ENCODE measurements at regions of chr1 and their contacts with region 1.

Region 1: GRCh38 chr1:175192630-175193526 is at the start of gene KIAA0040:
- DNase-seq: peak; percentile 51
- H3K4me3 Mint-ChIP-seq: peak within 1 kb of the TSS; percentile 95
- H3K27ac Mint-ChIP-seq: peak within 1 kb of the TSS; percentile 92
- H3K4me1 Mint-ChIP-seq: peaks cover 55% of the 10 kb centered on the region
- H3K27me3 Mint-ChIP-seq: no peaks in the 10 kb centered on the region
- total RNA-seq, gene KIAA0040: 30.0 and 35.3 TPM in 2 replicates

Region 2: DNA sequence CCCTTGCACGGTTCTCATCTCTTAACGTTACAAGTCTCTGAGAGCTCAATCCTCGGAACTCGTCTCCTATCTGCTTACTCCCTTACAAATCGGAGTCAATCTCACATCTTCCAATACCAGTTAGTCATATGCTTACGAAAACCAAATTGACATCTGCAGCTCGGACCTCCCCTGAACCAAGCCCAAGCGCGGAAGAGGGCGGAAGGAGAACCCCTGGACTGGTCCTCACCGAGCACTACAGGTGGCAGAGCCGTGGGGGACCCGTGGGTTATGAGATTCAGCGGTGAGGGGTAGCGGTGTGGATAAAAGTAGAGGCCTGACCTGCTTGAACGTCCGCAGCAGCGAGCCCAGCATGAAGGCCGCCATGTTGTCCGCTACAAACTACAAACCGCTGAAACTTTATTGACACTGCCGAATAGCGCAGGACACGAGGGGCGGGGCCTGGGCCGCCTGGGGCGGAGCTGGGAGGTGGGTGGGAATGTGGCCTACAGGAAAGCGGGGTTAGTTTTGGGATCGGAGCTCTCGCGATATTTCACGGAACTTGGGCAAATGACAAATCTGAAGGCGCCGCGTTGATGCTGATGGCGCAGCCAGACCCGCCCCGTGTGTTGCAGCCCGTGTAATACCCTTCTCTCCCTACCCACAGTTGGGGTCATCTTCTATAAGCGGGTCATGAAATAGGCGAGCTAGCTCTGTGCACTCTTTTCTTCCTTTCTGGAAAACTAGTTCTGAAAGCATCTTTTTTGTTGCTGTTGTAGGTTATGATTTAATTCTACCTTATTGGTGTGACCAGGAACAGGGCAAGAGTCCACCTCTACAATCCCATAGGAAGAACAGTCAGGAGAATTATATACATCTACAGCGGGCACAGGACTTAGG is 169.6 kb before region 1 on chr1 and contains the start of gene MRPS14:
- intact Hi-C with region 1: loop called (anchors 5 kb)
- DNase-seq: peak; percentile 96
- H3K4me3 Mint-ChIP-seq: peak within 1 kb of the TSS; percentile 99
- H3K27ac Mint-ChIP-seq: peak within 1 kb of the TSS; percentile 92
- H3K4me1 Mint-ChIP-seq: peaks cover 29% of the 10 kb centered on the region
- H3K27me3 Mint-ChIP-seq: no peaks in the 10 kb centered on the region
- total RNA-seq, gene MRPS14: 31.5 and 32.9 TPM in 2 replicates

Region 3: DNA sequence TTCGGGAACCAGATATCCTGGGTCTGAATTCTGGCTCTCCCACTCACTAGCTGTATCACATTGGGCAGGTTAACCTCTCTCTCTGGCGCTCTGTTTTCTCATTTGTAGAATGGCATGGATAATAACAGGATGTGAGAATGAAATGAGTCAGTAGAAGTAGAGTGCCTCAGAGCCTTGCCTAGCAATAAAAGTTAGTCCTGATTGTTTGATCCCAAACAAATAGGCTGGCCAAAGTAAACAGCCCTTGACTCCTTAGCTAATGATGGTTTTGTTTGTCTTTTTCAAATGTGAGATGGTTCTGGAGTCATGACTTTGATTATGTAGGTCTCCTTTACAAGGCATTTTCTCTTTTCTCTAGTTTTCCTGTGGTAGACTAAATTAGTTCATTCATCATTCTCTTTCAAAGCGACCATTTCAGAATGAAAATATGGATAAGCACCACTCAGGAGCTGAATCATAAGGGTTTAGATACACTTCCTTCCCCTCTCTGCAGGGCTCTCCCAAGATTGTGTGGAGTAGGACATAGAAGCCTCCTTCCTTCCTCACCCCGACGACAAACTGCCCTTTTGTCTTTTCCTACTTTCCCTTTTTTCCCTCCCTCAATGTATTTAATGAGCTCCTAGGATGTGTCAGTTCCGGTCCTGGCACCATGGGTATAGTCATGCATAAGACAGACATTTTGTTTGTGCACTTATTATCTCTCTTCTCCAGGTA is 23.4 kb before region 1 on chr1:
- intact Hi-C with region 1: loop called (anchors 2 kb)
- DNase-seq: no peak
- H3K4me3 Mint-ChIP-seq: no peak overlapping the region
- H3K27ac Mint-ChIP-seq: peak overlapping the region; percentile 39
- H3K4me1 Mint-ChIP-seq: peaks cover 50% of the 10 kb centered on the region
- H3K27me3 Mint-ChIP-seq: no peaks in the 10 kb centered on the region

Region 4: GRCh38 chr1:175221666-175222175 is 28.8 kb after region 1 on chr1:
- intact Hi-C with region 1: loop called (anchors 5 kb)
- DNase-seq: no peak
- H3K4me3 Mint-ChIP-seq: no peak overlapping the region
- H3K27ac Mint-ChIP-seq: no peak overlapping the region
- H3K4me1 Mint-ChIP-seq: peaks cover 18% of the 10 kb centered on the region
- H3K27me3 Mint-ChIP-seq: no peaks in the 10 kb centered on the region

Region 5: GRCh38 chr1:175481126-175482066 is 288.5 kb after region 1 on chr1:
- intact Hi-C with region 1: loop called (anchors 5 kb)
- DNase-seq: no peak
- H3K4me3 Mint-ChIP-seq: no peak overlapping the region
- H3K27ac Mint-ChIP-seq: no peak overlapping the region
- H3K4me1 Mint-ChIP-seq: peaks cover 11% of the 10 kb centered on the region
- H3K27me3 Mint-ChIP-seq: peaks cover 58% of the 10 kb centered on the region